Vagina (tissue), 2 donors: ENCODE measurements at regions of chr9 and their contacts with region 1.

Region 1: GRCh38 chr9:18985464-18985951 is 47.5 kb downstream of the SAXO1 start:
- DNase-seq: no peak
- H3K4me3 ChIP-seq: no peak overlapping the region
- H3K27ac ChIP-seq: no peak overlapping the region
- H3K4me1 ChIP-seq: peaks cover 31% of the 10 kb centered on the region
- H3K27me3 ChIP-seq: no peaks in the 10 kb centered on the region
- CTCF ChIP-seq: no peak
- POLR2A ChIP-seq: no peak

Region 2: GRCh38 chr9:18666986-18667772 is 318.3 kb before region 1 on chr9:
- intact Hi-C with region 1: loop called (anchors 10 kb)
- DNase-seq: no peak
- H3K4me3 ChIP-seq: no peak overlapping the region
- H3K27ac ChIP-seq: no peak overlapping the region
- H3K4me1 ChIP-seq: peaks cover 12% of the 10 kb centered on the region
- H3K27me3 ChIP-seq: no peaks in the 10 kb centered on the region
- CTCF ChIP-seq: no peak
- POLR2A ChIP-seq: no peak

Region 3: GRCh38 chr9:18947772-18948391 is 37.6 kb before region 1 on chr9:
- intact Hi-C with region 1: no loop called
- DNase-seq: no peak
- H3K4me3 ChIP-seq: no peak overlapping the region
- H3K27ac ChIP-seq: no peak overlapping the region
- H3K4me1 ChIP-seq: no peaks in the 10 kb centered on the region
- H3K27me3 ChIP-seq: no peaks in the 10 kb centered on the region
- CTCF ChIP-seq: no peak
- POLR2A ChIP-seq: no peak